Head of caudate nucleus (tissue), 42 donors: ENCODE measurements at regions of chr1 and their contacts with region 1.

Region 1: DNA sequence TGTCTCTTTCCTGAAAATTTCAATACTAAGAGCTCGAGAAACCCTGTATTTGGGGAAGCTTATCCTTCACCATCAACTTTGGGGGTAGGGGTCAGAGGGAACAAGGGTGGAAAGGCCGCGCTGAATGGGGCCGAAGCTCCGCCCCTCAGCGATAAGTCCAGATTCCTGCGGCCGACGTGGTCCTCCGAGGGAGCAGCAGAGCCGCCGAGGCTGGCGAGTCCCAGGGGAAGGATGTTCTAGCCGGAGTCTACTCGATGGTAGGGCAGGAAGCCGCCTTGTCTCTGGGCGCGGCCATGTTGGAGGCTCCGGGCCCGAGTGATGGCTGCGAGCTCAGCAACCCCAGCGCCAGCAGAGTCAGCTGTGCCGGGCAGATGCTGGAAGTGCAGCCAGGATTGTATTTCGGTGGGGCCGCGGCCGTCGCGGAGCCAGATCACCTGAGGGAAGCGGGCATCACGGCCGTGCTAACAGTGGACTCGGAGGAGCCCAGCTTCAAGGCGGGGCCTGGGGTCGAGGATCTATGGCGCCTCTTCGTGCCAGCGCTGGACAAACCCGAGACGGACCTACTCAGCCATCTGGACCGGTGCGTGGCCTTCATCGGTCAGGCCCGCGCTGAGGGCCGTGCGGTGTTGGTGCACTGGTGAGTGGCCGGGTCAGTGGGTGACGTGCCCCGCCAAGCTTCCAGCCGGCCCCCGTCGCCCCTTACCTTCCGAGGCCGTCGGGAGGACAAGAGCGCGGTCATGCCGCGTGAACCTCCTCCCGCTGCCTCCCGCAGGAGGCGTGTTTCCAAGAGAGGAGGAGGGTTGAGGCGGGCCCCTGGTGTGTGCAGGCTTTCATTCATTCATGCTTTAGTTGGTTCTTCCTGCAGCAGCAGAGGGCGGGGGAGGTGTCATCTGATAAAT is at the start of gene DUSP12:
- DNase-seq: peak; percentile 86 to 98 (median 95)

Region 2: GRCh38 chr1:161486806-161487741 is 262.7 kb before region 1 on chr1:
- intact Hi-C with region 1: loop called (anchors 10 kb)
- DNase-seq: peak in 30 of 42 donors; percentile 7 to 82 (median 58)